Activated CD4-positive, alpha-beta T cell treated with anti-CD3 and anti-CD28 coated beads for 36 hours (primary cell): ENCODE measurements at regions of chr10 and their contacts with region 1.

Region 1: DNA sequence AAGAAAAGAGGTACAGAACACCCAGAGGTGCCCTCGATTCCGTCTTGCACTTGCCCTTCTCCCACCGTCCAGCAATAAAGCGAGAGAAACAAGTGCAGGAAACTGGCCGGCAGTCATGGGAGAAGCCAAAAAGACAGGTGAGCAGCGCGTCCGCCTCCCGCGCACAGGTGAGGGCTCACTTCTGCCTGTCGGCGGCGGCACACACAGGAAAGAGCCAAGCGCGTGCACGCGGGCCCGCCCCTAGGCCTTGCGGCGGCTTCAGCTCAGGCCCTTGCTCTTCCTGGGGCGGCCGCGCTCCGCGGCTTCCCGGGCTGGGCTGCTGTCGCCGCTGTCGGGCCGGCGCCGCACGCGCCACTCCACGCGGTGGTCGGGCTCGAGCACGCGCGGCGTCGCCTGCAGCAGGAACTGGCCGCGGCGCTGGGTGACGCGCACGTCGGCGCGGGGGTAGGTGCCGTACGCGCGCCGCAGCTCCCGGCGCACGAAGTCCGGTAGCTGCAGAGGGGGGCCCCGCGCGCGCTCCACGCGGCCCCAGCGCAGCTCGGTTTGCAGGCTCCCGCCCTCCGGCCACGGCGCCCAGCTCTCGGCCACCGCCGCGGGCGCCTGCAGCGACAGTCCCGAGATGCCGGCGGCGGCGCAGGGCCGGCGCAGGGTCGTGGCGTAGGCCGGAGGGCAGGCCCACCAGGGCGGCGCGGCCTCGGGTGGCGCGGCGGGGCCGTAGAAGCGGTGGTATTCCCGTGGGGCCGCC is 977 bp downstream of the C10orf95 start:
- DNase-seq: peak; percentile 91
- ATAC-seq: peak; percentile 66
- H3K4me3 Mint-ChIP-seq: peak overlapping the region; percentile 95
- H3K27ac Mint-ChIP-seq: peak overlapping the region; percentile 93
- H3K4me1 Mint-ChIP-seq: peaks cover 25% of the 10 kb centered on the region
- H3K27me3 Mint-ChIP-seq: no peaks in the 10 kb centered on the region

Region 2: DNA sequence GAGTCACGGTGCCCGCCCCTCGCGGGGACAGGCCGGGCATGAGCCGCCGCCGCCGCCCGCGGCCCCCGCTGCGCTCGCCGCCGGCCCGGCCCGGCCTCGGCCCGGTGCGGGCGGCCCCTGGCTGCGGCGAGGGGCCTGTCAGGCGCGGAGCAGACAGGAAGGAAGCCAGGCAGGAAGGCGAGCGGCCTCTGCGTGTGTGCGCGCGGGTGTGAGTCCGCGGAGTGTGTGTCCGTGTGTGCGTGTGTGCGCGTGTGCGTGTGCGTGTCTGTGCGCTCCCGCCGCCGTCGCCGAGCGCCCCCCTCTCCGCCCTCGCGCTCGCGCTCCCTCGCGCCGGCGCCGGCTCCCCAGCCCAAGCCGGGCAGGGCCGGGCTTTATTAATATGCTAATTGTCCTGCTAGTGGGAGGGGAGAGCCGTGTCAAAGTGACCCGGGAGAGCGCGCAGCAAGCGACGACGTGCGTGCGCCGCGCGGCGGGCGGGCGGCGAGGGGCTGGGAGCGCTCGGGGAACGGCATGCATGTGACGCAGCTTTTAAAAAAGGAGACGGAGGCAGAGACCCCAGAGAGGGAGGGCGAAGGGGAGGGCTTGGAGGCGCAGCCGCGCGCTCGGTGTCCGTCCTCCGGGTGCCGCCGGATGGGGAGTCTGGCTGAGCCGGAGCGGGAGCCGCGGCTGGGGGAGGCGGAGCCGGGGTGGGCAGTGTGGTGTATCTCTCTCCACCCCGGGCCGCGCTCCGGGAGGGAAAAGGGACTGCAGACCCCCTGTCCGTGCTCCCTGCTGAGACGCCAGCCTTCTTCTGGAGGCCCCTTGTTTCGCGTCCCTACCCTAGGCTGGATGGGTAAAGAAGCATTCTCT is 330.0 kb before region 1 on chr10 and contains the start of gene LDB1:
- CTCF ChIA-PET with region 1: no interaction called
- POLR2A ChIA-PET with region 1: no interaction called
- intact Hi-C with region 1: no loop called
- DNase-seq: peak; percentile 77
- ATAC-seq: peak; percentile 28
- H3K4me3 Mint-ChIP-seq: peak within 1 kb of the TSS; percentile 81
- H3K27ac Mint-ChIP-seq: peak within 1 kb of the TSS; percentile 97
- H3K4me1 Mint-ChIP-seq: peaks cover 51% of the 10 kb centered on the region
- H3K27me3 Mint-ChIP-seq: no peaks in the 10 kb centered on the region
- total RNA-seq, gene LDB1: 69.6 to 86.7 TPM

Region 3: GRCh38 chr10:102399217-102400089 is 50.9 kb before region 1 on chr10:
- CTCF ChIA-PET with region 1: interaction called, 21 read pairs
- POLR2A ChIA-PET with region 1: interaction called, 3 read pairs
- intact Hi-C with region 1: loop called (anchors 1 kb)
- DNase-seq: peak; percentile 94
- ATAC-seq: peak; percentile 60
- H3K4me3 Mint-ChIP-seq: peak overlapping the region; percentile 95
- H3K27ac Mint-ChIP-seq: peak overlapping the region; percentile 98
- H3K4me1 Mint-ChIP-seq: peaks cover 41% of the 10 kb centered on the region
- H3K27me3 Mint-ChIP-seq: no peaks in the 10 kb centered on the region

Region 4: GRCh38 chr10:102408728-102409603 is 41.4 kb before region 1 on chr10:
- CTCF ChIA-PET with region 1: interaction called, 4 read pairs
- POLR2A ChIA-PET with region 1: no interaction called
- intact Hi-C with region 1: loop called in 1 of 2 experiments (anchors 1 kb)
- DNase-seq: peak; percentile 91
- ATAC-seq: peak; percentile 69
- H3K4me3 Mint-ChIP-seq: peak overlapping the region; percentile 71
- H3K27ac Mint-ChIP-seq: peak overlapping the region; percentile 73
- H3K4me1 Mint-ChIP-seq: peaks cover 35% of the 10 kb centered on the region
- H3K27me3 Mint-ChIP-seq: peaks cover 14% of the 10 kb centered on the region

Region 5: GRCh38 chr10:102432162-102432950 is 18.0 kb before region 1 on chr10 and contains the start of gene CUEDC2:
- CTCF ChIA-PET with region 1: interaction called, 8 read pairs
- POLR2A ChIA-PET with region 1: interaction called, 9 read pairs
- intact Hi-C with region 1: loop called (anchors 1 kb)
- DNase-seq: peak; percentile 99
- ATAC-seq: peak; percentile 94
- H3K4me3 Mint-ChIP-seq: peak within 1 kb of the TSS; percentile 85
- H3K27ac Mint-ChIP-seq: peak within 1 kb of the TSS; percentile 94
- H3K4me1 Mint-ChIP-seq: peaks cover 42% of the 10 kb centered on the region
- H3K27me3 Mint-ChIP-seq: no peaks in the 10 kb centered on the region
- total RNA-seq, gene CUEDC2: 60.8 to 72.7 TPM

Region 6: GRCh38 chr10:102461187-102462054 is 11.1 kb after region 1 on chr10:
- CTCF ChIA-PET with region 1: interaction called, 25 read pairs
- POLR2A ChIA-PET with region 1: interaction called, 4 read pairs
- intact Hi-C with region 1: loop called (anchors 1 kb)
- DNase-seq: peak; percentile 97
- ATAC-seq: peak; percentile 98
- H3K4me3 Mint-ChIP-seq: peak overlapping the region; percentile 85
- H3K27ac Mint-ChIP-seq: peak overlapping the region; percentile 73
- H3K4me1 Mint-ChIP-seq: peaks cover 27% of the 10 kb centered on the region
- H3K27me3 Mint-ChIP-seq: no peaks in the 10 kb centered on the region

Region 7: GRCh38 chr10:102476466-102477141 is 26.2 kb after region 1 on chr10:
- CTCF ChIA-PET with region 1: interaction called, 7 read pairs
- POLR2A ChIA-PET with region 1: interaction called, 3 read pairs
- intact Hi-C with region 1: loop called (anchors 1 to 2 kb)
- DNase-seq: peak; percentile 36
- ATAC-seq: no peak
- H3K4me3 Mint-ChIP-seq: no peak overlapping the region
- H3K27ac Mint-ChIP-seq: peak overlapping the region; percentile 78
- H3K4me1 Mint-ChIP-seq: peaks cover 28% of the 10 kb centered on the region
- H3K27me3 Mint-ChIP-seq: no peaks in the 10 kb centered on the region